ENCODE measurements at regions of chr15 and their contacts with region 1.

Region 1: DNA sequence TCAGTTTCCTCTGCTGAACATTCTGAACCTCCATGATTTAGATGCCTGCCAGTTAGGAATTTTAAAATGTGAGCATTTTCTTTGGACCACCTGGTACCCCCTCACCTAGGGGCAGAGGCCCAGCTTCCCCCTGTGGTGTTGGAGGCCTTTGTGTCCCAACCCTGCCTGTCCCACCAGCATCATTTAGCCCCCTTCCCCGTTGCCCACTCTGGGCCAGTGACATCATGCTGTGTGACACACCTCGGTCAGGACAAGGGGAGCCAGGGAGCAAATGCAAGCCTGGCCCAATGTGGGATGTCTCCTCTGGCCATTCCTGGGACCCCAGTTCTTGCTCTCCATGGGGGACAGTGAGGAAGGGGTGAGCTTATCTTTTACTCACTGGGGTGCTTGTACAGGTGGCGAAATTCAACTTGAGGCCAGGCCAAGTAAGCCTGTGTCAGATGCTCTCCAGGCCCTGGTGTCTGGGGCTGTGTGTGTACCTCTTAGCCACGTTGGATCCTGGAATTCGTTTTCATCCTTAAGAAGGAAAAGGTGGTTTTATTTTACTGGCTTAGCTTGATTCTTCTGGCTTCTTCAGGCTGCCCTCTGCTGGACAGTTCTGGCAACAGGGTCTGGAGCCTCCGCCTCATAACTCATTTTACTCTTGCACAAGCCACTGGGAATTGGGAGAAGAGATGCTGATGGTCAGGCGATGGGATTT is 49.7 kb upstream of the MYZAP start:
- DNase-seq: no peak
- H3K4me3 ChIP-seq: no peak overlapping the region
- CTCF ChIP-seq: peak; percentile 84

Region 2: GRCh38 chr15:56491110-56491722 is 1050.7 kb before region 1 on chr15:
- CTCF ChIA-PET with region 1: interaction called, 11 read pairs
- POLR2A ChIA-PET with region 1: no interaction called
- DNase-seq: peak; percentile 36
- H3K4me3 ChIP-seq: no peak overlapping the region
- CTCF ChIP-seq: peak; percentile 91

Region 3: GRCh38 chr15:57427367-57427821 is 114.6 kb before region 1 on chr15:
- CTCF ChIA-PET with region 1: no interaction called
- POLR2A ChIA-PET with region 1: no interaction called
- DNase-seq: no peak
- H3K4me3 ChIP-seq: no peak overlapping the region
- CTCF ChIP-seq: no peak

Region 4: GRCh38 chr15:57505949-57506391 is 36.0 kb before region 1 on chr15:
- CTCF ChIA-PET with region 1: interaction called, 14 read pairs
- POLR2A ChIA-PET with region 1: no interaction called
- DNase-seq: no peak
- H3K4me3 ChIP-seq: no peak overlapping the region
- CTCF ChIP-seq: no peak

Region 5: GRCh38 chr15:57527382-57528091 is 14.4 kb before region 1 on chr15:
- CTCF ChIA-PET with region 1: interaction called, 164 read pairs
- POLR2A ChIA-PET with region 1: interaction called, 3 read pairs
- DNase-seq: peak; percentile 65
- H3K4me3 ChIP-seq: no peak overlapping the region
- CTCF ChIP-seq: peak; percentile 42

Region 6: DNA sequence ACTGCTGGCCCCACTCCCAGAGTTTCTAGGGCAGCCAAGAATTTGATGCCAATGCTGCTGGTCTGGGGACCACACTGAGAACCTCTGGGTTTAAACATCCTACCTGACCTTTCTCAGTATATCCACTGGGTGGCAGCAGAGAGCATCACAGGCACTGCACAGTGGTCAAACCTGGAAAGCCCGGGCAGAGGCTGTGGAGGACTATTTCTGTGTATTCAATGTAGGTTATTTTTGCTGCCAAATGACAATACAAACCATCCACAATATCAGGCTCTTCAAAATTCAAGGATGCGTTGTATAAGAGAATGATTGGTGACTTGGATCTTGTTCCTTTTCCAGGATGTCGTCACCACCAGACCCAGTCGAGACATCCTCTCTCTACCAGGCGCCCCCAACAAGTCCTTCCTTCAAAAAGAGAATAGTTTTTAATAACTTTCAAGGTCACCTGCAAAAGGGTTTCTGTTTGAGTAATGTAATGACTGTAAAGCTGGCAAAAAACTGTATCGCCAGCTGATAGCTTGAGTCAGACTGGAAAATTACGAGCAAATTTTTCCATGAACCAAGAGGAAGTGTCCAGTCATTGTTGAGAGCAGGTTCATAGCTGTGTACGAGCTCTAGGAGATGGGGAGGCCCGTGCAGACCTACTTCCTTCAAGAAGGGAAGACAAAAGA is 19.2 kb after region 1 on chr15:
- CTCF ChIA-PET with region 1: interaction called, 97 read pairs
- POLR2A ChIA-PET with region 1: no interaction called
- DNase-seq: peak; percentile 10
- H3K4me3 ChIP-seq: no peak overlapping the region
- CTCF ChIP-seq: peak; percentile 87

Region 7: DNA sequence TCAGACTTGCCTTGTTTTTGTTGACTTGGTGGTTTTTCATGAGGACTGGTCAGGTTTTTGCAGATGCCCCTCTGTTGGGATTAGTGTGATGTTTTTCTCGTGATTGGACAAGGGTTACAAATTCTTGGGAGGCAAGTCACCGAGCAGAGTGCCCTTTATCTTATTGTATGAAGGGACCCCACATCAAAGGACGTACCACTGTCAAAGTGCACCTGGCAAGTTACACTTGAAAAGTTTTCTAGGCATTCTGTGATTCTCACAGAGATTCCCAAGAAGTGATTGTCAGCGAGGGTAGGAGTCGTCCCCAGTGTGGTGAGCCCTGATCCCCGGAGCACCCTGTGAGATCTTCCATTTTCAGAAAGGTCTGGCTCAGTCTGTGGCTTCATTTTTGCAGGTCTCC is 274.6 kb after region 1 on chr15:
- CTCF ChIA-PET with region 1: no interaction called
- POLR2A ChIA-PET with region 1: no interaction called
- DNase-seq: no peak
- H3K4me3 ChIP-seq: no peak overlapping the region
- CTCF ChIP-seq: no peak